ENCODE measurements at regions of chr2 and their contacts with region 1.

Region 1: GRCh38 chr2:149064856-149065630 is 26.5 kb downstream of the LYPD6B start:
- DNase-seq: peak; percentile 32
- ATAC-seq: no peak
- H3K4me3 ChIP-seq: no peak overlapping the region
- H3K27ac ChIP-seq: no peak overlapping the region
- H3K4me1 ChIP-seq: peaks cover 9% of the 10 kb centered on the region
- H3K27me3 ChIP-seq: no peaks in the 10 kb centered on the region
- CTCF ChIP-seq: no peak
- POLR2A ChIP-seq: no peak
- RAD21 ChIP-seq: no peak

Region 2: GRCh38 chr2:148231858-148232257 is 833.2 kb before region 1 on chr2:
- CTCF ChIA-PET with region 1: no interaction called
- POLR2A ChIA-PET with region 1: no interaction called
- dilution Hi-C with region 1: no loop called
- in situ Hi-C with region 1: no loop called
- intact Hi-C with region 1: loop called (anchors 5 kb)
- DNase-seq: no peak
- ATAC-seq: no peak
- H3K4me3 ChIP-seq: no peak overlapping the region
- H3K27ac ChIP-seq: no peak overlapping the region
- H3K4me1 ChIP-seq: peaks cover 3% of the 10 kb centered on the region
- H3K27me3 ChIP-seq: no peaks in the 10 kb centered on the region
- CTCF ChIP-seq: no peak
- POLR2A ChIP-seq: no peak
- RAD21 ChIP-seq: no peak

Region 3: DNA sequence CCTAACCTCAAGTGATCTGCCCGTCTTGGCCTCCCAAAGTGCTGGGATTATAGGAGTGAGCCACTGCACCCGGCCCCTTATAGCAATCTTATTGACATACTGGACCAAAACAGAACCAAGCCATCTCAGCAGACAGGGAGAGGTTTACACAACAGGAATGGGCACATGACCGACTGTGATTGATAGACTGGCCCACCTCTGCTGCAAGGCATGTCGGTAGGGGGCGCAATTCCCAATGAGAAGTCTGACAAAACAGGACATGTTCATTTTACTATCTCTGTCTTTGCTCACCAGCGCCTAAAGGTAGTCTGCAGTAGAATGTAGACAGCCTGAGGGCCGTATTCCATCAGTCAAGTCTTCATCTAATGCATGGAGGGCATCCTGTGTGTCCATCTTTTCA is 24.6 kb before region 1 on chr2:
- CTCF ChIA-PET with region 1: no interaction called
- POLR2A ChIA-PET with region 1: no interaction called
- dilution Hi-C with region 1: no loop called
- in situ Hi-C with region 1: no loop called
- intact Hi-C with region 1: no loop called
- DNase-seq: no peak
- ATAC-seq: no peak
- H3K4me3 ChIP-seq: no peak overlapping the region
- H3K27ac ChIP-seq: no peak overlapping the region
- H3K4me1 ChIP-seq: no peaks in the 10 kb centered on the region
- H3K27me3 ChIP-seq: peaks cover 33% of the 10 kb centered on the region
- CTCF ChIP-seq: peak; percentile 33
- POLR2A ChIP-seq: no peak
- RAD21 ChIP-seq: no peak; the same call in 1 of the 2 replicates